Right cardiac atrium (tissue), 5 donors: ENCODE measurements at regions of chr19 and their contacts with region 1.

Region 1: GRCh38 chr19:17570791-17571190 is 15.3 kb downstream of the COLGALT1 start:
- DNase-seq: no peak
- ATAC-seq: no peak
- H3K4me3 ChIP-seq: no peak overlapping the region
- H3K27ac ChIP-seq: no peak overlapping the region
- H3K4me1 ChIP-seq: no peaks in the 10 kb centered on the region
- H3K27me3 ChIP-seq: no peaks in the 10 kb centered on the region

Region 2: GRCh38 chr19:17245244-17245984 is 325.4 kb before region 1 on chr19 and contains the start of gene NR2F6:
- intact Hi-C with region 1: no loop called
- DNase-seq: peak; percentile 56 to 84 (median 78)
- ATAC-seq: no peak
- H3K4me3 ChIP-seq: peak within 1 kb of the TSS; percentile 88
- H3K27ac ChIP-seq: peak within 1 kb of the TSS; percentile 74
- H3K4me1 ChIP-seq: peaks cover 3% of the 10 kb centered on the region
- H3K27me3 ChIP-seq: no peaks in the 10 kb centered on the region
- total RNA-seq, gene NR2F6: 38.6 to 57.5 (median 45.7) TPM

Region 3: DNA sequence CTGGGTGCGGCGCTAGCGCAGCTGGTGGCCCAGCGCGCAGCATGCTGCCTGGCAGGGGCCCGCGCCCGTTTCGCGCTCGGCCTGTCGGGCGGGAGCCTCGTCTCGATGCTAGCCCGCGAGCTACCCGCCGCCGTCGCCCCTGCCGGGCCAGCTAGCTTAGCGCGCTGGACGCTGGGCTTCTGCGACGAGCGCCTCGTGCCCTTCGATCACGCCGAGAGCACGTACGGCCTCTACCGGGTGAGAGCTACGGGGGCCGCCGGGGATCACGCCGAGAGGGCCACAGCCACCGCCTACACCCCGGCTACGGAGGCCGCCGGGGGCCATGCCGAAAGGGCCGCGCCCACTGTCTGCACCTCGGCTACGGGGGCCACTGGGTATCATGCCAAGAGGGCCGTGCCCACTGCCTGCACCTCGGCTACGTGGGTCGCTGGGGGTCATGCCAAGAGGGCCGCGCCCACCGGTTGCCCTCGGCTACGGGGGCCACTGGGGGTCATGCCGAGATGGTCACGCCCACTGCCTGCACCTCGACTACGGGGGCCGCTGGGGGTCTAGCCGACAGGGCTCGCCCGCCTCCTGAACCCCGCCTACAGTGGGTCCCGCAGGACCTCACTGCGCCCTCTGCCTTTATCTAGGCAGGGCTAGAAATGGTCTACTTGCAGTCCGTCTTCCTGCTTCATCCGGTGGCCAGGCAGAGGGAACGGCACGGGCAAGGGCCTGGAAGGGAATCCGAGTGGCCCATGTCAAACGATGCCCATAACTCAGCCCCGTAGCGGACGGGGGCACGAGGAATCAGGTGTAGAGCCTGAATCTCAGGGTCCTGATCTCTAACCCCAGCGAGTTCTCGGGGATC is 58.8 kb before region 1 on chr19:
- intact Hi-C with region 1: no loop called
- DNase-seq: peak; percentile 90 to 96 (median 95)
- ATAC-seq: peak; percentile 81 to 82
- H3K4me3 ChIP-seq: peak overlapping the region; percentile 77
- H3K27ac ChIP-seq: peak overlapping the region; percentile 92
- H3K4me1 ChIP-seq: peaks cover 7% of the 10 kb centered on the region
- H3K27me3 ChIP-seq: no peaks in the 10 kb centered on the region

Region 4: GRCh38 chr19:17539238-17540117 is 31.3 kb before region 1 on chr19:
- intact Hi-C with region 1: loop called in 1 of 4 experiments (anchors 5 kb)
- DNase-seq: peak; percentile 98
- ATAC-seq: peak; percentile 92 to 93
- H3K4me3 ChIP-seq: peak overlapping the region; percentile 22
- H3K27ac ChIP-seq: no peak overlapping the region
- H3K4me1 ChIP-seq: no peaks in the 10 kb centered on the region
- H3K27me3 ChIP-seq: no peaks in the 10 kb centered on the region

Region 5: DNA sequence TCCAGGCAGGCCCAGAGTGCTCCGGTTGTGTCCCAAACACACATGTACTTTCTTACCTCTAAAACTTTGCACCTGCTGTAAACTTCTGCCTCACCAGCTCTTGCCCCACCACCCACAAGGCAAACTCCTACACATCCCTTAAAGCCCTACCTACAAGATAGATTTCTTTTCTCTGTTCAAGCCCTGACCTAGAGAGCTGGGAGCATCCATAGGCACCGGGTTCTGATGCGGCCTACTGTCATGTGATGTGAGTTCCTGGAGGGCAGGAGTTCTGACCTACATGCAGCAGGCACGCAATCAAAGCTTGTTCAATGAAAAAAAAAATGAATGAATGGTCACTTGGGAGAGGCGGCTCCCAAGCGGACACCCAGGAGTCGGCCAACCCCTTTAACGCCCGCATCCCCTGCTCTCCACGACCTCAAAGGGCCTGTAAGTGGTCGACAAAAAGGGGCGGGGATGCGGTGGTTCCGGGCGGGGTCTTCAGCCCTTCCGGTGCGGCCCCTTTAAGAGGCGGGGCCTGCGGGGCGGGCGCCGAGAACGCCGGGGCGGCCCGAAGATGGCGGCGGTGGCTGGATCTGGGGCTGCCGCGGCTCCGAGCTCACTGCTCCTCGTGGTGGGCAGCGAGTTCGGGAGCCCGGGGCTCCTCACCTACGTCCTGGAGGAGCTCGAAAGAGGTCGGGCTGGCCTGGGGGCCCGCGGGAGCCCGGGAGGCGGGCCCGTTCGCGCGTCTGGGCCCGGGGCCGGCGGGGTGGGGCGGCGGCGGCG is 148.3 kb after region 1 on chr19 and contains the start of gene MAP1S:
- intact Hi-C with region 1: no loop called
- DNase-seq: peak; percentile 71 to 89 (median 87)
- ATAC-seq: peak; percentile 55 to 63
- H3K4me3 ChIP-seq: peak within 1 kb of the TSS; percentile 96
- H3K27ac ChIP-seq: peak within 1 kb of the TSS; percentile 63
- H3K4me1 ChIP-seq: peaks cover 15% of the 10 kb centered on the region
- H3K27me3 ChIP-seq: no peaks in the 10 kb centered on the region
- total RNA-seq, gene MAP1S: 24.8 to 35.5 (median 31.6) TPM